ENCODE measurements at regions of chr1 and their contacts with region 1.

Region 1: DNA sequence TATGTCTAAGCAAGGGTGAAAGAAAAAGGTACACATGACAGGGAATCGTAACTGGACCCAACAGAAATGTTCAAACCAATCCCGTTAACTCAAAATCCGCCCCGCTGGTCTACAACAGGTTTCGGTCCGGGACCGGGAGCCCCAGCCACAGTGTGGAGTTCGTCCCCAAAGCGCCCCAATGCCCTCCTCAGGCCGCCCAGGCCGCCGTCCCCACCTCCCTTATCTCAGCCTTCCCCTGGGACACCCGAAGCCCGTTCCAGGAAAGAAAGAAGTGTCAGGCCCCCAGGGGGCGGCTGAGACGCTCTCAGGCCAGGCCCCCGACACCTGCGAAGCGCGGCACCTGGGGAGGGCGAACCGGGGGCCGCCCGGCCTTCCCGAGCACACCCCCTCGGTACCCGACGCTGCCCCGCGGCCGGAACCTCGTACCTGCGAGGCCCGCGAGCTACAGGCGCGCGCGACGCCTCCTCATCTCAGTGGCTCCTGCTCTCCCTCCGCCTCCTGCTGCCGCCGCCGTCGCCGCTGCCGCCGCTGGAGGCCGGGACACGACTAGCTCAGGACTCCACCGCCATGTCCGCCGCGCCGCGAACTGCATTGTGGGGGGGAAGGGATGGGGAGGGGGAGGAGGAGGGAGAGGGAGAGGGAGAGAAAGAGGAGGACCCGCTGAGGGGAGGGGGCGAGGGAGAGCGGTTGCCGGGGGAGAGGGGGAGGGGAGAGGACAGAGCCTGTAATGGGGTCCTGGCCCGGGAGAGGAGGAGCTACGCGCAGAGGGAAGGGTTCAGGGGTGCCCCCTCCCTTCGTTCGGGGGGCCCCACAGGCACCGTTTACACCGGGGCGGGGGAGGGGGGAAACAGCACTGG is at the start of gene TUT4:
- DNase-seq: peak; percentile 82
- ATAC-seq: peak; percentile 68
- H3K4me3 Mint-ChIP-seq: peak within 1 kb of the TSS; percentile 65
- H3K27ac Mint-ChIP-seq: peak within 1 kb of the TSS; percentile 61
- H3K4me1 Mint-ChIP-seq: peaks cover 23% of the 10 kb centered on the region
- H3K27me3 Mint-ChIP-seq: peaks cover 10% of the 10 kb centered on the region
- total RNA-seq, gene TUT4: 58.5 to 65.9 TPM

Region 2: DNA sequence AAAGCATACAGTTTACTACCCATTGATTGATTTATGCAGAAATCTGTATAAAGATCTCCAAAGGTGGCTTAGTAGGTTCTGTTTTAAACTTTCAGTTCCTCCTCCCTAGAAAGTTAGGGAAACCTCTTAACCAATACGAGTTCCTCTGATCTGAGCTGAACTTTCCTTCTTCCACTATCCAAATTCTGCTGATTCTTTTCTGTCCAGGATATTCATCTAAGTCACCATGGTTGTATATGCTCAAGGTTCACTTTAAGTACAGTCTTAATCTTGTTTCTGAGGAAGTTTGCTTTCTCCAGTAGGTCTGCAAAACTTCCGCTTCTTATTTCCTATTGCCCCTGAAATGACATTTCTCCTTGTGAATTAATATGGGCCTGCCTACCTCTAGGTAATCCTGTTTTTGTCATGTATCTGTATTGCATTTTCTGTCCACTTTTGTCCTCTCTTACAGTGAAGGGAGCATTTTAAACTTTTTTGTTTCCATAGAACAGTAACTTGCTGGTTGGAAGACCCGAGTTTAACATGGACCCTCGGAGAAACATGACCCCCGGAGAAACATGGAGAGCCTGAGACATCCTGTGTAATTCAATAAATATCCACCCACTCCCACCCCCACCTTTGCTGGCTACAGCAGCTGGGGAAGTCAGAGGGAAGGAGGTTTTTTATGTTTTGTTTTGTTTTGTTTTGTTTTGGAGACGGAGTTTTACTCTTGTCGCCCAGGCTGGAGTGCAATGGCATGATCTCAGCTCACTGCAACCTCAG is 16.9 kb after region 1 on chr1:
- CTCF ChIA-PET with region 1: interaction called, 10 read pairs
- POLR2A ChIA-PET with region 1: interaction called, 3 read pairs
- DNase-seq: no peak
- ATAC-seq: no peak
- H3K4me3 Mint-ChIP-seq: no peak overlapping the region
- H3K27ac Mint-ChIP-seq: peak overlapping the region; percentile 47
- H3K4me1 Mint-ChIP-seq: peaks cover 14% of the 10 kb centered on the region
- H3K27me3 Mint-ChIP-seq: peaks cover 3% of the 10 kb centered on the region